Calu3 (cell line): ENCODE measurements at regions of chr6 and their contacts with region 1.

Region 1: DNA sequence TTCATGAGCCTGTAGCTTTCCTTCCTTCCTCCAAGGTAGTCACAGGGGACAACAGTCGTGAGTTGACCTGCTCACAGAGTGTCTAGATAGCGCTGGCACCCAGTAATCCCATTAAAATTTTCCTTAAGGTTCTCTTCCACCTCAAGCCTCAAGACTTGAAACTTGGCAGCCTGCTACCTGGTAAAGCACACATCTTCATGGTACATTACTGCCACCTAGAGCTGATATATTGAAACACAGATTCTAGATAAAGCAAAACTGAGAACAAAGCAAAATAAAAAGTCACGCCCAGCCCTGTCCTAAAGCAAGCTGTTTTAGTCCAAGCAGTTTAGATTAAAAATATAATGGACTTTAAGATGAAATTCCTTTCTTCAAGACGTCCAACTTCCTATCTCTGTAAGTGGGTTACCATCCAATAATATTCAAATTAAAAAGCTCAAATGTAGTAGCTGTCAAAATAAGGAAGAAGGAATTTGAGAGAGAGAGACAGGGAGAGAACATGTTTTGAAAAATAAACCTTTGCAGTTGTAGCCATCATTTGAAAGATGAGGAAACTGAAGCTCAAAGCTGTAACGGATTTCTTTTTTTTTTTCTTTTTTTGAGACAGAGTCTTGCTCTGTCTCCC is 50.7 kb upstream of the CD83 start:
- DNase-seq: peak; percentile 13
- H3K4me3 Mint-ChIP-seq: no peak overlapping the region
- H3K27ac Mint-ChIP-seq: no peak overlapping the region
- H3K4me1 Mint-ChIP-seq: no peaks in the 10 kb centered on the region
- H3K27me3 Mint-ChIP-seq: no peaks in the 10 kb centered on the region
- CTCF ChIP-seq: no peak

Region 2: GRCh38 chr6:13795041-13795750 is 271.7 kb before region 1 on chr6:
- CTCF ChIA-PET with region 1: no interaction called
- intact Hi-C with region 1: loop called (anchors 1 kb)
- DNase-seq: peak; percentile 72
- H3K4me3 Mint-ChIP-seq: no peak overlapping the region
- H3K27ac Mint-ChIP-seq: no peak overlapping the region
- H3K4me1 Mint-ChIP-seq: no peaks in the 10 kb centered on the region
- H3K27me3 Mint-ChIP-seq: no peaks in the 10 kb centered on the region
- CTCF ChIP-seq: peak; percentile 69

Region 3: GRCh38 chr6:13908955-13909381 is 157.9 kb before region 1 on chr6:
- CTCF ChIA-PET with region 1: interaction called, 27 read pairs
- intact Hi-C with region 1: loop called (anchors 1 kb)
- DNase-seq: peak; percentile 36
- H3K4me3 Mint-ChIP-seq: no peak overlapping the region
- H3K27ac Mint-ChIP-seq: no peak overlapping the region
- H3K4me1 Mint-ChIP-seq: peaks cover 12% of the 10 kb centered on the region
- H3K27me3 Mint-ChIP-seq: peaks cover 12% of the 10 kb centered on the region
- CTCF ChIP-seq: no peak

Region 4: DNA sequence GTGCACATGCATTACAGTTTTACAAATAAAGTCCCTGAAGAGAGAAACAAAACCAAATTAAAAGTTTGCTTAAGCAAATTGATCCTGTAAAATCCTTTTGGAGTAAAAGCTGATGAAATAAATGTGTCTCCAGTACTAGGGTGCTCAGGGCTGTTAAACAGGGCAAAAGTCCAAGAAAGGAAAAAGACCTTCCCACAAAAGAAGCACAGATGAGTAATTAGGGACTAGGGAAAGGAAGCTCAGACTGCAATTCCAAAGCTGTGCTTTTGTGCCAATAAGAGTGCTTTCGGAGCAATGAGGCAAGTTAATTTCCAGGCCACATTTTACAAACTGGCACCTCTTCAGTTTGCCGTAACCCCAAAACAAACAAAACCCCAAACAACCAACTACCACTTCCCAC is 152.5 kb before region 1 on chr6:
- CTCF ChIA-PET with region 1: interaction called, 27 read pairs
- intact Hi-C with region 1: loop called (anchors 1 kb)
- DNase-seq: no peak
- H3K4me3 Mint-ChIP-seq: no peak overlapping the region
- H3K27ac Mint-ChIP-seq: no peak overlapping the region
- H3K4me1 Mint-ChIP-seq: peaks cover 12% of the 10 kb centered on the region
- H3K27me3 Mint-ChIP-seq: peaks cover 31% of the 10 kb centered on the region
- CTCF ChIP-seq: no peak

Region 5: DNA sequence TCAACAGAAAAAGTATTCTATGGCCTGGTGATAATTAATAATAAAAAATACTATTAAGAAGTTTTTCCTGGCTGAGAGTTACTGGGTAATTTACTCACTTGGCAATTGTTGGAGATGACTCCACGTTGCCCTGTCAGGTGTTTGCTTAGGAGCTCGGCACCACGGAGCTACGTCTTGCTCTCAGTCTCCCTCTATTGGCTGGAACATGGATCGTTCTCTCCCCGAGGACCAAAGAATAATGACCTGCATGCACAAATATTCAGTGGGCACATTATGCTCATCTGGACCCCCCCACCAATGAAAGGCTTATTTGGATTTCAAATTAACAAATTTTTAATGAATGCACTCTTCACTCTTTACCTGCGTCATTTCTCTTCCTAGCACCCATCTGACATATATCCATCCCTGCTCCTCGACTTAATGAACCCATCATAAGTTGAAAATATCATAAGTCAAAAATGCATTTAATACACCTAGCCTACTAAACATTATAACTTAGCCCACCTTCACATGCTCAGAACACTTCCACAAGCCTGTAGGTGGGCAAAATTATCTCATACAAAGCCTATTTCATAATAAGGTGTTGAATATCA is 20.3 kb before region 1 on chr6:
- CTCF ChIA-PET with region 1: interaction called, 15 read pairs
- intact Hi-C with region 1: no loop called
- DNase-seq: peak; percentile 39
- H3K4me3 Mint-ChIP-seq: no peak overlapping the region
- H3K27ac Mint-ChIP-seq: no peak overlapping the region
- H3K4me1 Mint-ChIP-seq: no peaks in the 10 kb centered on the region
- H3K27me3 Mint-ChIP-seq: peaks cover 30% of the 10 kb centered on the region
- CTCF ChIP-seq: no peak

Region 6: DNA sequence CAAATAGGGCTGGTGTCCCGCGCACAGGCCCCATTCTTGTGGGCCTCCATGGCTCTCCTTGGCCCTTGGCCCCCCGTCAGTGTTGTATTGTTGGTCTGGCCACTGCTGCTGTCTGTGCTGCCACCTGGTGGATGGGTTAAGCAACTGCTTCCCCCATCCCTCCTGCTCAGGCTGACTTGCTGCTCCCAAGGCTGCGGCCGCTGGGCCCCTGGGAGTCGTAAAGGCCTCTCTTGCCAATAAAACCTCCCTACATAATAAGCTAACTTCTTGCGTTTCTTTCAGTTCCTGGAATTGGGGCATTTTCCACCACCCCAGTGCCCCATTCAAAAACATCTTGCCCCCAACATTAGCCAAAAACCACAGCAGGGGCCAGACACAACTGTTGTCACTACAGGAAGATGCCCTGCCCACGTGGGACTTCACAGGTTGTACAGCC is 77.8 kb after region 1 on chr6:
- CTCF ChIA-PET with region 1: no interaction called
- intact Hi-C with region 1: loop called (anchors 2 kb)
- DNase-seq: peak; percentile 79
- H3K4me3 Mint-ChIP-seq: no peak overlapping the region
- H3K27ac Mint-ChIP-seq: no peak overlapping the region
- H3K4me1 Mint-ChIP-seq: no peaks in the 10 kb centered on the region
- H3K27me3 Mint-ChIP-seq: no peaks in the 10 kb centered on the region
- CTCF ChIP-seq: peak; percentile 66